ENCODE measurements at regions of chr1 and their contacts with region 1.

Region 1: DNA sequence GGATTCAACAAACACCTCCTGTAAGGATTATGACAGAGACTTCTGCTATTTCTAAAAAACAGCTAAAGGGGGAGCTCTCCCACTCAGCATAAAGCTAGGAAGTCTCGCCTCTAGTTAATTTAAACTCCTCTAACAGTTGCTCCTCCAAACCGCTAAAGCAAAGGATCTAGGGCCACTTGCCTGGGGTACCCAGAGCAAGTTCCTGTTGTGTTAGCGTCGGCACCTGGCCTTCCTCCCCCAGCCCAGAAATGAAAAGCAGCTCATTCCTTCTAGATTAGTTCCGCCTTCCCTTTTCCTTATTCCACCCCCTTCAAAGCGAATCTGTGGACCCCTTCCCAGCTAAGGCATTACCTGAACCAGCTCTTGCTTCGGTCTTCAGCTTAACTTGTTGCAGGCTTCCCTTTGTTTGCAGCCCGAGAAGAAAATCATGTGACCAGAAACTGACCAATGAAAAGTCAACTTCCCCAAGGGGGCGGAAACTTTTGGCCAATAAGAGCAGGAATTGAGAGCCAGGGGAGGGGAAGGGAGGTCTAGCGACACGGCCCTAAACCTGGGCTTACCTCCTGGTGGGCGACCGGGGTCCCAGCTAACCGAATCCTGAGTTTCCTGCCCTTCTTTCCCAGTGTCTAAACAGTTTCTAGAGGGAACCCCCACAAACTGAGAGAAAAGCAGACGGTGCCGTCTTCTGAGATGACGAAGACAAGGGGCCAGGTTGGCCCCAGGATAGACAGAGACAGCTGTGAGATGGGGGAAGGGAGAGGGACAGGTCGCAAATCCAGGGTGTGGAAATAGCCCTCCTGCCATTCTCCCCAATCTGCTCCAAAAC is at the start of gene PBXIP1:
- DNase-seq: peak; percentile 92
- ATAC-seq: peak; percentile 62
- H3K4me3 Mint-ChIP-seq: peak within 1 kb of the TSS; percentile 95
- H3K27ac Mint-ChIP-seq: peak within 1 kb of the TSS; percentile 98
- H3K4me1 Mint-ChIP-seq: peaks cover 78% of the 10 kb centered on the region
- H3K27me3 Mint-ChIP-seq: no peaks in the 10 kb centered on the region
- total RNA-seq, gene PBXIP1: 52.6 to 61.5 TPM

Region 2: GRCh38 chr1:154936555-154937084 is 19.3 kb before region 1 on chr1 and contains the start of gene PMVK:
- CTCF ChIA-PET with region 1: interaction called, 23 read pairs
- DNase-seq: peak; percentile 98
- ATAC-seq: peak; percentile 85
- H3K4me3 Mint-ChIP-seq: peak within 1 kb of the TSS; percentile 95
- H3K27ac Mint-ChIP-seq: peak within 1 kb of the TSS; percentile 96
- H3K4me1 Mint-ChIP-seq: peaks cover 61% of the 10 kb centered on the region
- H3K27me3 Mint-ChIP-seq: no peaks in the 10 kb centered on the region
- total RNA-seq, gene PMVK: 43.6 to 46.8 TPM

Region 3: GRCh38 chr1:154974063-154974807 is 18.3 kb after region 1 on chr1 and contains the start of gene CKS1B:
- CTCF ChIA-PET with region 1: interaction called, 21 read pairs
- DNase-seq: peak; percentile 98
- ATAC-seq: peak; percentile 89
- H3K4me3 Mint-ChIP-seq: no peak within 1 kb of the TSS
- H3K27ac Mint-ChIP-seq: no peak within 1 kb of the TSS
- H3K4me1 Mint-ChIP-seq: peaks cover 38% of the 10 kb centered on the region
- H3K27me3 Mint-ChIP-seq: no peaks in the 10 kb centered on the region
- total RNA-seq, gene CKS1B: 149 to 155 TPM